ENCODE measurements at regions of chr10 and their contacts with region 1.

Region 1: DNA sequence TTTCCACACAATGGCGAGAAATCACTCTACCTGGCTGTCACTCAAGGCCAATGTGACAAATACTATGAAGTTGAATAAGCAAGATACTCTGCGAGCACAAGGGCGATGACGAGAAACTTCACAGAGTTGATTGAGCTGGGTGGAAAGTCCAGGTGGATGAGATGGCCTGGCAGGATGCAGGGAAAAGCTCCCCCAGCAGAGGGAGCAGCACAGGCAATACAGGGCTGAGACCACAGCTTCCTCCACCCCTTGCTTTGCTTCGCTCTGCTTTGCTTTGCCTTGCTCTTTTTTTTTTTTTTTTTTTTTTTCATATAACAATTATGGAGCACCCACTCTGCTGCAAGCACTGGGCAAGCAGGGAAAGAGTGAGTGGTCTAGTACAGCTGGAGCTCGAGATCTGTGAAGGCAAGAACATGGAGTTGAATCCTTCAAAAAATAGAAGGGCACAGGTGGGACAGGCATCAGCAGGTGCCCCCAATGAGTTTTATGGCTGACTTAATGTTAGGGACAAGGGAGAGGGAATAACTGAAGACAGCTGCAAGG is 88.3 kb downstream of the CABCOCO1 start:
- DNase-seq: no peak
- H3K4me3 ChIP-seq: no peak overlapping the region
- H3K27ac ChIP-seq: no peak overlapping the region
- H3K4me1 ChIP-seq: peaks cover 0 to 52% (median 29%) of the 10 kb centered on the region in 4 donors
- H3K27me3 ChIP-seq: no peaks in the 10 kb centered on the region
- CTCF ChIP-seq: peak in 3 of 4 experiments; percentile 36 to 48 (median 38)
- EP300 ChIP-seq: no peak
- POLR2A ChIP-seq: no peak

Region 2: GRCh38 chr10:61835069-61835945 is 84.3 kb after region 1 on chr10:
- intact Hi-C with region 1: loop called (anchors 5 kb)
- DNase-seq: no peak
- H3K4me3 ChIP-seq: no peak overlapping the region
- H3K27ac ChIP-seq: peak overlapping the region; percentile 43 to 78 (median 74)
- H3K4me1 ChIP-seq: peaks cover 0 to 35% (median 32%) of the 10 kb centered on the region in 4 donors
- H3K27me3 ChIP-seq: no peaks in the 10 kb centered on the region
- CTCF ChIP-seq: peak; percentile 13 to 42 (median 24)
- EP300 ChIP-seq: no peak
- POLR2A ChIP-seq: no peak

Region 3: GRCh38 chr10:62268399-62269114 is 517.6 kb after region 1 on chr10 and contains the start of gene RTKN2:
- intact Hi-C with region 1: loop called (anchors 10 kb)
- DNase-seq: peak; percentile 78
- H3K4me3 ChIP-seq: peak within 1 kb of the TSS; percentile 58 to 84 (median 64)
- H3K27ac ChIP-seq: peak within 1 kb of the TSS in 1 of 4 donors; percentile 34
- H3K4me1 ChIP-seq: peaks cover 0 to 14% (median 10%) of the 10 kb centered on the region in 4 donors
- H3K27me3 ChIP-seq: peaks cover 0 to 6% (median 0%) of the 10 kb centered on the region in 3 donors
- CTCF ChIP-seq: no peak
- EP300 ChIP-seq: no peak
- POLR2A ChIP-seq: no peak
- total RNA-seq, gene RTKN2: not detected